Naive thymus-derived CD4-positive, alpha-beta T cell (primary cell): ENCODE measurements at regions of chrX and their contacts with region 1.

Region 1: DNA sequence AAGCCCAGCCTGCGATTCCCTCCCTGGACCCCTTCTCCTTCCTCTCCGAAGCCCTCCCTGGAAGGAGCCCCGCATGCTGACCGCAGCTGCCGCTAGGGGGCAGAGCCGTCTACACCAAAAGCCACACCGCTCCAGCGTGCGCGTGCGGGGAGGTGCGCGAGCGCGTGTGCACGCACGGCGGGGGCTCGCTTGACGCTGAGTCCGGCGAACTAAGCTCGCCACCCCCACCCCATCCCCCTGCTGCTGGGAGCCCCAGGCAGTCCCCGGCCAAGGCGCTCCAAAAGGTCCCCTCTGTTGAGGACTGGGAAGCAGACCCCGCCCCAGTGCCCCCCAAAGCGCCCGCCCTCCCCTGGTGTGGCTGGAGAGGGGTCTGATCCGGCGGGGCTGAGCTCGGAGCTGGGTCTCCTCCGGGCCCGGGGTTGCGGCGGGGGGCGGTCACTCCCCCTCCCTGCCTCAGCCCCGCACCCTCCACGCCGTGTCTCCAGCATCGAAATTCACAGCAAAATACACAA is 11.0 kb upstream of the CCNQ start:
- DNase-seq: peak; percentile 58 to 78 (median 71)
- ATAC-seq: peak; percentile 96
- H3K4me3 ChIP-seq: peak overlapping the region; percentile 44
- H3K4me3 Mint-ChIP-seq: peak overlapping the region; percentile 77 to 87 (median 85)
- H3K27ac ChIP-seq: peak overlapping the region; percentile 60
- H3K27ac Mint-ChIP-seq: peak overlapping the region in 8 of 9 donors; percentile 41 to 85 (median 76)
- H3K4me1 ChIP-seq: peaks cover 0 to 5% of the 10 kb centered on the region in 2 donors
- H3K4me1 Mint-ChIP-seq: peaks cover under 1 to 13% (median 7%) of the 10 kb centered on the region in 7 donors
- H3K27me3 ChIP-seq: no peaks in the 10 kb centered on the region
- H3K27me3 Mint-ChIP-seq: peaks cover 0 to 16% (median 0%) of the 10 kb centered on the region in 5 donors

Region 2: DNA sequence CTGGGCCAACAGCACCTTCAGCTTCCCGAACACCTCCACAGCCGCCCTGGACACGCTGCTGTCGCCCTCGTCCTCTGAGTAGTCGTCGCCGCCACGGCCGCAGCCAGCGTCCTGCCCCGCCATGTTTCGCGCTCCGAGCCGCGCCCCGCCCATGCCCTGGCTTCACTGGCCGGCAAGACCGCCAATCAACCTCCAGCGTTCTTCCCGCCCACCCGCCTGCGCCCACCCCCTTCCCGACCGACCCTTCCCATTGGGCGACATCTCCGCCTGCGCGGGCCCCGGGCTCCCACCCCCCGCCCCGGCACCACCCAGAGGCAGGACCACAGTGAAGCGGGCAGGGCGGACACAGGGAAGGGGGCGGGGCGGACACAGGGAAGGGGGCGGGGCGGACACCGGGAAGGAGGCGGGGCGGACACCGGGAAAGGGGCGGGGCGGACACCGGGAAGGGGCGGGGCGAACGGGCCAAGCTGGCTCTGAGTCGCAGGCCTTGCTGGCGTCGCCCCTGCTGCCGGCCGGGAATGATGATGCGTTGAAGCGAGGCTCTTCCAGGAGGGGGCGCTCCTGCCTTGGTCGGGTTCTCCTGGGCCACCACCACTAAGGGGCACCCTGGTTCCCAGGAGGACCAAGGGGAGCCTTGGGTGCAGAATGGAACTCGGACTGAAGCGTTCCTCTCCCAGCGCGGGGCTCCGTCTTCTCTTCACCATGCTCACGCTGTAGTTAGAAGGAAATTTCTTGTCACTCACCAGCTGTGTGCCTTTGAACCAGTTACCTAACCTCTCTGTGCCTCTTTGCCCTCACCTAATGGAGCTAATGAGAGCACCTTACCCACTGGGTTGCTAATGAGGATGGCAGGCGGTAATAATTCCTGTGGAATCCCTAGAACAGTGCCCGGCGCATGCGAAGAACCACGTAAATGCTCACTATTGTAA is 139.3 kb before region 1 on chrX and contains the start of gene HAUS7:
- CTCF ChIA-PET with region 1: no interaction called
- POLR2A ChIA-PET with region 1: no interaction called
- intact Hi-C with region 1: loop called in 1 of 2 experiments (anchors 1 kb)
- DNase-seq: peak; percentile 73 to 88 (median 85)
- ATAC-seq: peak; percentile 92
- H3K4me3 ChIP-seq: peak within 1 kb of the TSS; percentile 74
- H3K4me3 Mint-ChIP-seq: peak within 1 kb of the TSS; percentile 64 to 88 (median 82)
- H3K27ac ChIP-seq: peak within 1 kb of the TSS; percentile 68
- H3K27ac Mint-ChIP-seq: peak within 1 kb of the TSS in 8 of 9 donors; percentile 62 to 85 (median 82)
- H3K4me1 ChIP-seq: peaks cover 3 to 17% of the 10 kb centered on the region in 2 donors
- H3K4me1 Mint-ChIP-seq: peaks cover 0 to 30% (median 12%) of the 10 kb centered on the region in 7 donors
- H3K27me3 ChIP-seq: no peaks in the 10 kb centered on the region
- H3K27me3 Mint-ChIP-seq: no peaks in the 10 kb centered on the region
- total RNA-seq, gene HAUS7: 23.2 to 44.8 (median 31.4) TPM

Region 3: DNA sequence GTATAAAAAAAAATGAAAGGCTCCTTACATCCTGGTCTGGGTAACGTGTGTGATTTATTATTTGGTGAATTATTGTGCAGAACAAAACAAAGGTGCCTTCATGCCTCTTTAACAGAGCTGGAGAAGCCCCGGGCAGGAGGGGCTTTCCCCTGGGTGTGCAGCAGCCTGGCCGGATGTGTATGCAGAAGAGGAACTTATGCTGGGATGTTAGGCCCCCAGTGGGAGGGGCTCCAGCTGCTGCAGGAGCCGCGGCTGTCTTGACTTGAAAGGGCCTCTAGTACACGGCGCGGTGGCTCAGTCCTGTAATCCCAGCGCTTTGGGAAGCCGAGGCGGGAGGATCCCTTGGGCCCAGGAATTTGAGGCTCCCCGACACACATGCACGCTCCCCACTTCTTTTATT is 27.1 kb before region 1 on chrX:
- CTCF ChIA-PET with region 1: no interaction called
- POLR2A ChIA-PET with region 1: no interaction called
- intact Hi-C with region 1: loop called in 1 of 2 experiments (anchors 5 kb)
- DNase-seq: peak; percentile 33 to 73 (median 65)
- ATAC-seq: peak; percentile 100
- H3K4me3 ChIP-seq: peak overlapping the region; percentile 20
- H3K4me3 Mint-ChIP-seq: peak overlapping the region; percentile 59 to 88 (median 72)
- H3K27ac ChIP-seq: peak overlapping the region; percentile 41
- H3K27ac Mint-ChIP-seq: peak overlapping the region; percentile 72 to 85 (median 79)
- H3K4me1 ChIP-seq: peaks cover 0 to 14% of the 10 kb centered on the region in 2 donors
- H3K4me1 Mint-ChIP-seq: peaks cover 10 to 39% (median 25%) of the 10 kb centered on the region in 7 donors
- H3K27me3 ChIP-seq: no peaks in the 10 kb centered on the region
- H3K27me3 Mint-ChIP-seq: no peaks in the 10 kb centered on the region

Region 4: DNA sequence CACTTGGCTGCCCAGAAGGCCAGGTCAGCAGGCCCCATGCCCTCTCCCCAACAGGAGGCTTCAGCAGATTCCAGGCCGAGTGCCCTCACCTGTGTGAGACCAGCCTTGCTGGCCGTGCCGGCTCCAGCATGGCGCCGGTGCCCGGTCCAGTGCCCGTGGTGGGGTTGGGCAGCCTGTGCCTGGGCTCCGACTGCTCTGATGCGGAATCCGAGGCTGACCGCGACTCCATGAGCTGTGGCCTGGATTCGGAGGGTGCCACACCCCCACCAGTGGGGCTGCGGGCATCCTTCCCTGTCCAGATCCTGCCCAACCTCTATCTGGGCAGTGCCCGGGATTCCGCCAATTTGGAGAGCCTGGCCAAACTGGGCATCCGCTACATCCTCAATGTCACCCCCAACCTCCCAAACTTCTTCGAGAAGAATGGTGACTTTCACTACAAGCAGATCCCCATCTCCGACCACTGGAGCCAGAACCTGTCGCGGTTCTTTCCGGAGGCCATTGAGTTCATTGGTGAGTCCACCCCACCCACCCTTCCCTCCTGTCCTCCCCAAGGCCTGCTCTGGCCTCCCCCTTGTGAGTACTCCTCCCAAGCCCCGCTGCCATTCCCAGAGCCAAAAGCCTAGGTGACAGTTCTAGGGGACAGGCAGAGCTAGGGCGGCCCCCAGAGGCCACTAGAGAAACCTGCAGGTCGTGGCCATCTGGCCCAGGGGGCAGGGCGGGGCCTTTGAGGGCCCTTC is 39.4 kb after region 1 on chrX:
- CTCF ChIA-PET with region 1: interaction called, 5 read pairs
- POLR2A ChIA-PET with region 1: interaction called, 3 read pairs
- intact Hi-C with region 1: loop called (anchors 1 to 5 kb)
- DNase-seq: peak in 4 of 9 donors; percentile 19 to 33 (median 30)
- ATAC-seq: peak; percentile 83
- H3K4me3 ChIP-seq: no peak overlapping the region
- H3K4me3 Mint-ChIP-seq: peak overlapping the region in 1 of 10 donors; percentile 51
- H3K27ac ChIP-seq: no peak overlapping the region
- H3K27ac Mint-ChIP-seq: no peak overlapping the region
- H3K4me1 ChIP-seq: no peaks in the 10 kb centered on the region
- H3K4me1 Mint-ChIP-seq: peaks cover 0 to 4% (median 0%) of the 10 kb centered on the region in 7 donors
- H3K27me3 ChIP-seq: peaks cover 0 to 4% of the 10 kb centered on the region in 2 donors
- H3K27me3 Mint-ChIP-seq: peaks cover 0 to 36% (median 5%) of the 10 kb centered on the region in 5 donors

Region 5: DNA sequence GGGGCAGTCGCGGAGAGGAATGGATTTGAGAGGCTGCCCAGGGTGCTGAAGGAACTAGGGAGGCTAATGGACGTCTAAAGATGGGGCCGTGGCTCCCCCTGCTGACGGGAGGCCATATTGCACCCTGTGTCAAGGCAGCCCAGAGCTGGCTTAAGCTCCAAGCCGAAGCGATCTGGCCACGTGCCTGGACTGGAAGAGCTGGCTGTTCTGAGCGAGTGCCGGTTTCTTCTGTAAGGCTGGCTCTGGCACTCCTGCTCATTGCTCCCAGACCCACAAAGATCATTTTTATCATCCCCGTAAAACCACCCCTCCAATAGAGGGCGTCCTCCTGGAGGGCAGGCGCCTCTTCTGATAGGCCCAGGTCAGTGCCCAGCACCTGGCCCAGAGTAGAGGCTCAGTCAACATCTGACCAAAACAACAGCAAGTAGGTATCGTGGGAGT is 58.0 kb after region 1 on chrX:
- CTCF ChIA-PET with region 1: interaction called, 6 read pairs
- POLR2A ChIA-PET with region 1: no interaction called
- intact Hi-C with region 1: loop called (anchors 1 to 2 kb)
- DNase-seq: peak; percentile 51 to 78 (median 65)
- ATAC-seq: peak; percentile 93
- H3K4me3 ChIP-seq: no peak overlapping the region
- H3K4me3 Mint-ChIP-seq: peak overlapping the region; percentile 53 to 82 (median 74)
- H3K27ac ChIP-seq: no peak overlapping the region
- H3K27ac Mint-ChIP-seq: peak overlapping the region in 4 of 9 donors; percentile 2 to 51 (median 37)
- H3K4me1 ChIP-seq: no peaks in the 10 kb centered on the region
- H3K4me1 Mint-ChIP-seq: peaks cover 5 to 10% (median 7%) of the 10 kb centered on the region in 7 donors
- H3K27me3 ChIP-seq: no peaks in the 10 kb centered on the region
- H3K27me3 Mint-ChIP-seq: peaks cover 0 to 28% (median 7%) of the 10 kb centered on the region in 5 donors

Region 6: GRCh38 chrX:153778684-153779101 is 168.7 kb after region 1 on chrX:
- CTCF ChIA-PET with region 1: no interaction called
- POLR2A ChIA-PET with region 1: no interaction called
- intact Hi-C with region 1: no loop called
- DNase-seq: no peak
- ATAC-seq: no peak
- H3K4me3 ChIP-seq: no peak overlapping the region
- H3K4me3 Mint-ChIP-seq: no peak overlapping the region
- H3K27ac ChIP-seq: no peak overlapping the region
- H3K27ac Mint-ChIP-seq: no peak overlapping the region
- H3K4me1 ChIP-seq: no peaks in the 10 kb centered on the region
- H3K4me1 Mint-ChIP-seq: peaks cover 0 to 7% (median 4%) of the 10 kb centered on the region in 7 donors
- H3K27me3 ChIP-seq: no peaks in the 10 kb centered on the region
- H3K27me3 Mint-ChIP-seq: peaks cover 0 to 10% (median 7%) of the 10 kb centered on the region in 5 donors